ENCODE measurements at regions of chr15 and their contacts with region 1.

Region 1: GRCh38 chr15:92903941-92904831 is 4.1 kb downstream of the CHD2 start:
- DNase-seq: peak; percentile 88 to 99
- ATAC-seq: peak; percentile 81 to 90
- H3K4me3 ChIP-seq: peak overlapping the region; percentile 57
- H3K27ac ChIP-seq: peak overlapping the region; percentile 94 to 95
- H3K4me1 ChIP-seq: peaks cover 41% of the 10 kb centered on the region
- CTCF ChIP-seq: no peak
- EP300 ChIP-seq: peak; percentile 52 to 70; a peak in 2 of 5 replicates
- POLR2A ChIP-seq: peak; percentile 70
- RAD21 ChIP-seq: peak in 1 of 2 experiments; percentile 38; a peak in 2 of 5 replicates

Region 2: DNA sequence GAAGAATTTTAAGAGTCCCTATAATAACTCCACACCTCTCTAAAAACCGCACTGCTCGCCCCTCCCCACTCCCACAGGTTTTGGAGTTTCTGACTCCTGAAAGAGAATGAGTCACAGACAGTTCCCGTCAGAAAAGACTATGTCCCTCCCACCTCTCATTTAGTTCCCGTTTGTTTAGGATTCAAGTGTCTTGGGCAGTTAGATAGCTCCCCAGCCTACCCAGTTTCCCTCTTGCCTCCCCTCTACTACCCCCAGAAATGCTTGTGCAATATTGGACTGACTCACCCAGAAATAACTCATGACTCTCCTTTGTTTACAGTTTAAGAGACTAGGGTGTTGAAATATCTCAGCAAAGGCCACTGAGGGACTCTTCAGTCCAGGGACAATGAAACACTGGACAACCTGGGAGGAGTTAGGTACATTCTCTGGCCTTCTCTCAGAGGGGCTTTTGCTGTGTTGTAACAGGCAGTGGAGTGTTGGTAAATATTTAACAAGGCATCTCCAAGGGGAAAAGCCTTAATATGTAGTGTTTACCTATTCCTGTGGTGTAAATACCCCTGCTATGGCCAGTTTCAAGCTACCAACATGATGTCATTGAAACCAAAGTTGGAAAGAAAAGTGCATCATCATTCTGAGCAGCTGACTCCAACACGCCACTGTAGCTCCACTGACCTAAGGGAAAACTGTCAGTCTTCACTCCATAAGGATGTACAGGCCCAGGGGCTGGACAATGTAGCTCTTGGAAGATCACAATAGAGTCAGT is 100.2 kb before region 1 on chr15:
- CTCF ChIA-PET with region 1: interaction called, 98 read pairs
- POLR2A ChIA-PET with region 1: interaction called, 278 read pairs
- DNase-seq: peak; percentile 96 to 100
- ATAC-seq: peak; percentile 85 to 87
- H3K4me3 ChIP-seq: no peak overlapping the region
- H3K27ac ChIP-seq: peak overlapping the region; percentile 95 to 97
- H3K4me1 ChIP-seq: peaks cover 48% of the 10 kb centered on the region
- CTCF ChIP-seq: no peak
- EP300 ChIP-seq: peak; percentile 98
- POLR2A ChIP-seq: no peak
- RAD21 ChIP-seq: peak; percentile 45 to 60; a peak in 3 of 5 replicates

Region 3: DNA sequence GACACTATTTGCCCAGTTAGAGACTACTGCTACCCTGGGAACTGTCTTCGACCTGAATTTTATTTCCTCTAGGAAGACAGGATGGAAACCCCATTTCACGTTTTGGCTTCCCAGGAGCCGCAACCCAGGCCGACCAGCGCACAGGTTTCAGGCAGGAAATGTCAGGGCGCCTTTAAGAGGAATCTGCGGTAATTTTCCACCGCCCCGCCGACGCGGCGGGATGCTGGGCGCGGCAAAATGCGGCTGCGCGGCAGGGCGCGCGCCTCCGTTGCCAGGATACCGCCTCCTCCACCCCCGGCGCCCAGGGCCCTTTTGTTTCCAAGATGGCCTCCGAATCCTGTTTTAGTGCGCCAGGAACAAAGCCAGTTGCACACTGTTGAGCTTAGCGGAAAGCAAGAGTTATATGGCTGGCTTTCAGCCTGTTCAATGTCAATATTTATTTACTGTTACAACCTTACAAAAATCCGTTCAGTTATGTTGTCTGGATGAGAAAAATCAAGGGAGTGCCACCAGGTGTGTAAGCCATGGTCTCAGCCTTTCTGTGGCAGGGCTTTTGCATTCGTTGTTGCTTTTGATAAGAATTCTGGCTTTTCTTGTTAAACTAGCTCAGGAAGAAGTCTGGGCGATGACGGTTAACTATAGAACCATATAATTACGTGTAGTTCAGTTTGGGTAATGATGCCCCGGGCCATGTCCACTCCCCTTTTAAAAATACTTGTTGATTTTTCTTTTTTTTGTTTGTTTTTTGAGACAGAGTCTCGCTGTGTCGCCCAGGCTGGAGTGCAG is 83.8 kb before region 1 on chr15:
- CTCF ChIA-PET with region 1: interaction called, 6 read pairs
- POLR2A ChIA-PET with region 1: interaction called, 33 read pairs
- DNase-seq: peak; percentile 96 to 97
- ATAC-seq: peak; percentile 85 to 88
- H3K4me3 ChIP-seq: peak overlapping the region; percentile 46
- H3K27ac ChIP-seq: peak overlapping the region; percentile 90 to 92
- H3K4me1 ChIP-seq: peaks cover 52% of the 10 kb centered on the region
- CTCF ChIP-seq: no peak
- EP300 ChIP-seq: no peak
- POLR2A ChIP-seq: peak; percentile 57
- RAD21 ChIP-seq: peak in 1 of 2 experiments; percentile 3; a peak in 2 of 5 replicates

Region 4: DNA sequence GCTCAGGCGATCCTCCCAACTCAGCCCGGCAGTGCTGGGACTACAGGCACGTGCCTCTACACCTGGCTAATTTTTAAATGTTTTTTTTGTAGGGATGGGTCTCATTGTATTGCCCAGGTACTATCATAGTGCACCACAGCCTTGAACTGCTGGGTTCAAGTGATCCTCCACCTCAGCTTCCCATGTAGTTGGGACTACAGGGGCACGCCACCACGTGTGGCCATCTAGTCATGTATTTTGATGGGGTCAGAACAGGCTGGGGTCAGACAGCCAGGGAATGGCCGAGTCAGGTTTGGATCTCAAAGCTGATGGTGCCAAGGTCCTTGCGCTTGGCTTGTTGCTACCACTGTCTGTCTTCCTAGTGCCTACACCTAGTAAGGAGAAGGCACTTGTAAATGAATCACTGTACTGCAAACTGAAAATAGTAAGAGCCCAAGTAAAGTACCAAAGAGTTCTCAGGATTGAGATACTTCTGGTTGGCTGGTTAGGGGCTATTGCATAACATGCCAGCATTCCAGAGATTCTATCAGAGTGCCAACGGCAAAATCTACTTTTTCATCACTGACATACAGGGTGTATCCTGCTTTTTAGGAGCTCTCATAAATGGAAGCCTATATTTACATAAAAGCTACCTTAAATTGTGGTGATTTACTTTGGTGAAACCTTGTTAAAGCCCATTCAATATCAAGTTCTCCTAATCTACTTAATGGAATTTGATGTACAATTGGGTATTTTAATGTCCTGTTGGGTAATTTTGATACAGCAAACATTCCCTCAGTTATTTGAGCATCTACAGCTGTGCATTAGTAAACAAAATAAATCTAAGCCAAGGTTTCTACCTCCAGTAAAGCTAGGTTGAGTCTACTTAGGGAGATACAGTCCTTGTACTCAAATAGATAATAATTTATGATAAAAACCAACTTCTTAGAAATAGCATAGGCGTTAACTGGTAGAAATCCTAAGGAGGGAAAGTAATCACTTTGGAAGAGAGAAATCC is 34.9 kb before region 1 on chr15:
- CTCF ChIA-PET with region 1: no interaction called
- POLR2A ChIA-PET with region 1: interaction called, 13 read pairs
- DNase-seq: peak in 1 of 2 experiments; percentile 84
- ATAC-seq: peak; percentile 82 to 84
- H3K4me3 ChIP-seq: peak overlapping the region; percentile 13; the same call in 1 of the 3 replicates
- H3K27ac ChIP-seq: peak overlapping the region; percentile 84 to 90
- H3K4me1 ChIP-seq: peaks cover 40% of the 10 kb centered on the region
- CTCF ChIP-seq: no peak
- EP300 ChIP-seq: peak in 1 of 2 experiments; percentile 66; a peak in 1 of 5 replicates
- POLR2A ChIP-seq: no peak
- RAD21 ChIP-seq: 0 out of 5 replicates have a peak, but pooled peaks of 1 of the 2 experiments have one; percentile 21

Region 5: DNA sequence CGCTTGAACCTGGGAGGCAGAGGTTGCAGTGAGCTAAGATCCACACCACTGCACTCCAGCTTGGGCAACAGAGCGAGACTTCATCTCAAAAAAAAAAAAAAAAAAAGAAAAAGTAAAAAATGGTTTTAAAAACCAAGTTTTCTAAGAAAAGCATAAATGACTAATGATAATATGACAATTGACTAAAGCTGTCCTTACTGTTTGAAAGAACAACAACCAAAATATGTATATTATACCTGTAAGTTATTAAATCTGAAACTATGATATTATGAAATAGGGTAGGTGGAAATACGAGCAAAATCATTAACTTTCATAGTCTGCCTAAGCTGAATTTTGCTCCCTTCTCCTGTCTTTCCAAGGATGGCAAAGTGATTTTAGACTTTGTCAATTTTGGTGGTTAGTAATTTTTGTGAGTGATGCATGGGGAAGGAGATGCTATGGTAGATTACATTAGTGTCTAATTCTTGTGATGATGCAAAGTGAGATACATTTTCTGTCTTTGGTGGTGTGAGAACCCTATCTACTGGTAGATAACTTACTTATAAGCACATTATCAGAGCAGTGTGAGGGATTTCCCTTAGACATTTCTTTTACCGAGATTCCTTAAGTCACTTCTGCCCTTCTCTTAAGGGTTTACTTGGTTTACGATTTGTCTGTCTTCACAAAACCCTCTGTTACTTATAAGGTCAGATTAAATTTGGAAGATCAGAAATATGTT is 14.6 kb before region 1 on chr15:
- CTCF ChIA-PET with region 1: interaction called, 4 read pairs
- POLR2A ChIA-PET with region 1: interaction called, 374 read pairs
- DNase-seq: no peak
- ATAC-seq: peak in 1 of 2 experiments; percentile 10; a peak in 2 of 6 replicates
- H3K4me3 ChIP-seq: no peak overlapping the region
- H3K27ac ChIP-seq: no peak overlapping the region
- H3K4me1 ChIP-seq: peaks cover 55% of the 10 kb centered on the region
- CTCF ChIP-seq: no peak
- EP300 ChIP-seq: no peak
- POLR2A ChIP-seq: no peak
- RAD21 ChIP-seq: no peak

Region 6: GRCh38 chr15:92917606-92918407 is 13.6 kb after region 1 on chr15:
- CTCF ChIA-PET with region 1: interaction called, 93 read pairs
- POLR2A ChIA-PET with region 1: interaction called, 56 read pairs
- DNase-seq: peak; percentile 86 to 97
- ATAC-seq: peak; percentile 55 to 59
- H3K4me3 ChIP-seq: peak overlapping the region; percentile 28
- H3K27ac ChIP-seq: peak overlapping the region; percentile 79 to 88
- H3K4me1 ChIP-seq: peaks cover 95% of the 10 kb centered on the region
- CTCF ChIP-seq: peak; percentile 98
- EP300 ChIP-seq: no peak
- POLR2A ChIP-seq: no peak
- RAD21 ChIP-seq: peak; percentile 94 to 98